ENCODE measurements at regions of chr11 and their contacts with region 1.

Region 1: DNA sequence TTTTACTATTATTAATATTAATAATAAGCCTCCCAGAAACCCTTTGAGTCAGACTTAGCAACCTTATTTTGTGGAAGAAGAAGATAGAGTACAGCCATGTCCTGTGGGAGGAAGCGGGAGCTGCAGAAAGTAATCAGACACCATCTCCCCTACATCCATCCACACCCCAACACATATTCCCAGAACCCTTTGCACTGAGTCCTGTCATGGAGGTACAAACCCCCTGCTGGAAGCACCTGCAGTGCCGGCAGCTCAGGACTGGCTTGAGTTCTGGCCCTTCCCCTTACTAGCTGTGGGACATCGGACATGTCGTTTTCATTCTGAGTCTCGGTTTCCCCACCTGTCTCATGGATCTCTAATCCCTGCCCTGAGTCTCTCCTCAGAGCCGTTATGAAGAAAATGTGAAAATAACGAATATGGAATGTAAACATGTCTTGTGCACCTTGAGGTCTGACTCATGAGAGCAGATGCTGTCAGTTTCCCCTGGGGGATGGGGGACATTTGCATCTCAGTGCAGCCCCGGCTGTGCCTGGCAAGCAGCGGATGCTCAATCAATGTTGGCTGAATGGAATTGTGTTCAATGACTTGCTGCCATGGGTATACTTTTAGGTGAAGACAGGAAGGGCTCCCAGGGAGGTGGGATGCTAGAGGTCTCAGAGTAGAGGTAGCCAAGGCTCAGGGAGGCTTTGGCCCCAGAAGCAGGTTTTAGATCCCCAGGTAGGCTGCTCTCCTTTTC is 45.4 kb downstream of the TP53I11 start:
- DNase-seq: no peak
- ATAC-seq: no peak
- H3K4me3 ChIP-seq: no peak overlapping the region
- H3K27ac ChIP-seq: no peak overlapping the region
- H3K4me1 ChIP-seq: no peaks in the 10 kb centered on the region
- H3K27me3 ChIP-seq: no peaks in the 10 kb centered on the region
- CTCF ChIP-seq: no peak
- POLR2A ChIP-seq: no peak

Region 2: GRCh38 chr11:44556735-44557409 is 348.4 kb before region 1 on chr11:
- intact Hi-C with region 1: loop called (anchors 5 kb)
- DNase-seq: peak; percentile 70 to 80 (median 74)
- ATAC-seq: peak; percentile 77
- H3K4me3 ChIP-seq: no peak overlapping the region
- H3K27ac ChIP-seq: no peak overlapping the region
- H3K4me1 ChIP-seq: peaks cover 5% of the 10 kb centered on the region
- H3K27me3 ChIP-seq: no peaks in the 10 kb centered on the region
- CTCF ChIP-seq: peak; percentile 56 to 96 (median 89)
- POLR2A ChIP-seq: no peak

Region 3: GRCh38 chr11:44775366-44775984 is 129.8 kb before region 1 on chr11:
- intact Hi-C with region 1: no loop called
- DNase-seq: peak; percentile 54 to 71 (median 59)
- ATAC-seq: peak; percentile 64
- H3K4me3 ChIP-seq: no peak overlapping the region
- H3K27ac ChIP-seq: no peak overlapping the region
- H3K4me1 ChIP-seq: no peaks in the 10 kb centered on the region
- H3K27me3 ChIP-seq: no peaks in the 10 kb centered on the region
- CTCF ChIP-seq: peak; percentile 47 to 68 (median 59)
- POLR2A ChIP-seq: no peak